ENCODE measurements at regions of chr14 and their contacts with region 1.

Region 1: GRCh38 chr14:63543000-63543825 is at the start of gene PPP2R5E:
- DNase-seq: peak; percentile 96
- ATAC-seq: peak; percentile 96
- H3K4me3 ChIP-seq: peak within 1 kb of the TSS; percentile 99
- H3K27ac ChIP-seq: peak within 1 kb of the TSS; percentile 77
- H3K4me1 ChIP-seq: no peaks in the 10 kb centered on the region
- H3K27me3 ChIP-seq: no peaks in the 10 kb centered on the region
- CTCF ChIP-seq: no peak
- EP300 ChIP-seq: no peak
- POLR2A ChIP-seq: peak; percentile 94
- RAD21 ChIP-seq: no peak
- polyA plus RNA-seq, gene PPP2R5E: 13.1 to 13.3 TPM

Region 2: DNA sequence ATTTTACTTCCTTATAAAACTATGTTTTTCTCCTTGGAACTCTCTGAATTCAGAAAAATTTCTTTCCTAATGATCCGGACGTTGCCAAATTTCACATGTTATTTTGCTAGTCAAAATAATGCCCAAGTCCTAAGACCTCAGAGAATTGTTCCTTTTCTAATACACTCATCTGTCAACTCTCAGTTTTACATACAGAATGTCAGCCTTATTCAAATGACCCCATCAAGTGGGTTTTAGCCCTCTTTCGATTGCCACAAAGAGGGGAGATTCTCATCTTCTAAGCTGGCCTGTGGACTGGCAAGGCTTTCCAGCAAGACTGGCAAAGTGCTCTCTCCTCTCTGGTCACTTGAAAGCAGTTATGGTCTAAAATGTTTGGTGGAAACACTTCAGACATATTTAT is 125.2 kb before region 1 on chr14:
- CTCF ChIA-PET with region 1: interaction called, 4 read pairs
- POLR2A ChIA-PET with region 1: no interaction called
- RAD21 ChIA-PET with region 1: no interaction called
- SMC1A ChIA-PET with region 1: no interaction called
- in situ Hi-C with region 1: no loop called
- intact Hi-C with region 1: loop called (anchors 10 kb)
- DNase-seq: no peak
- ATAC-seq: peak; percentile 74
- H3K4me3 ChIP-seq: no peak overlapping the region
- H3K27ac ChIP-seq: no peak overlapping the region
- H3K4me1 ChIP-seq: peaks cover 6% of the 10 kb centered on the region
- H3K27me3 ChIP-seq: no peaks in the 10 kb centered on the region
- CTCF ChIP-seq: no peak
- EP300 ChIP-seq: no peak
- POLR2A ChIP-seq: no peak
- RAD21 ChIP-seq: no peak

Region 3: GRCh38 chr14:63470962-63471793 is 72.0 kb before region 1 on chr14:
- CTCF ChIA-PET with region 1: interaction called, 4 read pairs
- POLR2A ChIA-PET with region 1: interaction called, 7 read pairs
- RAD21 ChIA-PET with region 1: interaction called, 24 read pairs
- SMC1A ChIA-PET with region 1: interaction called, 22 read pairs
- in situ Hi-C with region 1: no loop called
- intact Hi-C with region 1: loop called (anchors 5 kb)
- DNase-seq: peak; percentile 68
- ATAC-seq: peak; percentile 86
- H3K4me3 ChIP-seq: peak overlapping the region; percentile 20; the same call in 1 of the 2 replicates
- H3K27ac ChIP-seq: peak overlapping the region; percentile 69
- H3K4me1 ChIP-seq: peaks cover 22% of the 10 kb centered on the region
- H3K27me3 ChIP-seq: no peaks in the 10 kb centered on the region
- CTCF ChIP-seq: no peak
- EP300 ChIP-seq: peak; percentile 79 to 91
- POLR2A ChIP-seq: no peak
- RAD21 ChIP-seq: no peak

Region 4: DNA sequence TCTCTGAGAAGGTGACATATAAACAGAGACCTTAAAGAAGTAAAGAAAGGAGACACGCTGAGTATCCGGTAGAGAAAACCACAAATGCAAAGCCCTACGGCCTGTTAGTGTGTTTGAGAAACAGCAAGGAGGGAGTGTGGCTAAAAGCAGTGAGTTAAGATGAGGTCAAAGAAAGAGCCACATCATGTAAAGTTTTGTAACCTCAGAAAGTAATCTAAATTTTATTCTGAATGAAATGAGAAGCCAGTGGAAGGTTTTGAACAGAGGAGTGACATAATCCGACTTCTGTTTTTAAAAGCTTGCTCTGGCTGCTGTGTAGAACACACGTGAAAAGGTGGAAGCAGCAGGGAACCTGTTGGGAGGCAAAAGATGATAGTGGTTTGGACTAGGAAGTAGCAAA is 32.7 kb before region 1 on chr14:
- CTCF ChIA-PET with region 1: interaction called, 8 read pairs
- POLR2A ChIA-PET with region 1: interaction called, 3 read pairs
- RAD21 ChIA-PET with region 1: interaction called, 7 read pairs
- SMC1A ChIA-PET with region 1: interaction called, 11 read pairs
- in situ Hi-C with region 1: no loop called
- intact Hi-C with region 1: no loop called
- DNase-seq: peak; percentile 66
- ATAC-seq: peak; percentile 86
- H3K4me3 ChIP-seq: no peak overlapping the region
- H3K27ac ChIP-seq: peak overlapping the region; percentile 5
- H3K4me1 ChIP-seq: peaks cover 14% of the 10 kb centered on the region
- H3K27me3 ChIP-seq: no peaks in the 10 kb centered on the region
- CTCF ChIP-seq: no peak
- EP300 ChIP-seq: no peak
- POLR2A ChIP-seq: no peak
- RAD21 ChIP-seq: no peak

Region 5: DNA sequence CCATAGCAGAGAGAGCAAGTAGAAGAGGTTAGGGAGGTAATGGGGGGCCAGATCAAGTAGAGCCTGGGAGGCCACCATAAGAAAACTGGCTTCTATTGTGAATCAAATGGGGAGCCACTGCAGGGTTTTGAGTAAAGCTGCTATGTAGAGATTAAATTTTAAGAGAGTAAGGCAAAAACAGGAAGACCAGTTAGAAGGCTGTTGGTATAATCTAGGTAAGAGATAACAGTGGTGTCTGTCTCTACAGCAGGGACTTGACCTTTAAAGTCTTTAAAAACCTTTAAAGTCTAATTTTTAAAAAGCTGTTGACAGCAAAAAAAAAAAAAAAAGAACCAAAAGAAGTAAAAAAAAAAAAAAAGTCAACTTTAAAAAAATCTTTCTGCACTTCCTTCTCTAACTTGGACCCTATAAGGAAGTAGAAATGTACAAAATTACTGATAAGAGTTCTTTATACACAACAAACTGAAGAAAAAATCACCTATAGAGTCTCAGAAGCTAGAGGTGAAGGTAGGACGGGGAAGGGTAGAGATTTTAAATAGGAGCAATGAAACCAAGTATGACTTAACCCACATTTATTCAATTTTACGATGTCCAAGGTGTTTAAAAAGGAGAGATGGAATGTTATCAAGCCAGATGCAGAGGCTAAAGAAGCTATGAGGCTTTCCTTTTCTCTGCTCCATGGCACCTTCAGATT is 158.5 kb after region 1 on chr14:
- CTCF ChIA-PET with region 1: no interaction called
- POLR2A ChIA-PET with region 1: no interaction called
- RAD21 ChIA-PET with region 1: no interaction called
- SMC1A ChIA-PET with region 1: no interaction called
- in situ Hi-C with region 1: no loop called
- intact Hi-C with region 1: no loop called
- DNase-seq: no peak
- ATAC-seq: no peak
- H3K4me3 ChIP-seq: no peak overlapping the region
- H3K27ac ChIP-seq: no peak overlapping the region
- H3K4me1 ChIP-seq: peaks cover 24% of the 10 kb centered on the region
- H3K27me3 ChIP-seq: no peaks in the 10 kb centered on the region
- CTCF ChIP-seq: no peak
- EP300 ChIP-seq: no peak
- POLR2A ChIP-seq: no peak
- RAD21 ChIP-seq: no peak

Region 6: GRCh38 chr14:63727774-63728728 is 184.8 kb after region 1 on chr14 and contains the start of gene SGPP1:
- CTCF ChIA-PET with region 1: interaction called, 3 read pairs
- POLR2A ChIA-PET with region 1: no interaction called
- RAD21 ChIA-PET with region 1: interaction called, 12 read pairs
- SMC1A ChIA-PET with region 1: interaction called, 3 read pairs
- in situ Hi-C with region 1: no loop called
- intact Hi-C with region 1: no loop called
- DNase-seq: no peak
- ATAC-seq: peak; percentile 84
- H3K4me3 ChIP-seq: peak within 1 kb of the TSS; percentile 91
- H3K27ac ChIP-seq: peak within 1 kb of the TSS; percentile 60
- H3K4me1 ChIP-seq: peaks cover 3% of the 10 kb centered on the region; the same call in 1 of the 2 replicates
- H3K27me3 ChIP-seq: no peaks in the 10 kb centered on the region
- CTCF ChIP-seq: peak; percentile 39 to 59 (median 49); a peak in 5 of 6 replicates
- EP300 ChIP-seq: peak in 1 of 2 experiments; percentile 12; a peak in 1 of 4 replicates
- POLR2A ChIP-seq: peak; percentile 92
- RAD21 ChIP-seq: peak; percentile 49
- polyA plus RNA-seq, gene SGPP1: 8.8 to 17.1 TPM

Region 7: DNA sequence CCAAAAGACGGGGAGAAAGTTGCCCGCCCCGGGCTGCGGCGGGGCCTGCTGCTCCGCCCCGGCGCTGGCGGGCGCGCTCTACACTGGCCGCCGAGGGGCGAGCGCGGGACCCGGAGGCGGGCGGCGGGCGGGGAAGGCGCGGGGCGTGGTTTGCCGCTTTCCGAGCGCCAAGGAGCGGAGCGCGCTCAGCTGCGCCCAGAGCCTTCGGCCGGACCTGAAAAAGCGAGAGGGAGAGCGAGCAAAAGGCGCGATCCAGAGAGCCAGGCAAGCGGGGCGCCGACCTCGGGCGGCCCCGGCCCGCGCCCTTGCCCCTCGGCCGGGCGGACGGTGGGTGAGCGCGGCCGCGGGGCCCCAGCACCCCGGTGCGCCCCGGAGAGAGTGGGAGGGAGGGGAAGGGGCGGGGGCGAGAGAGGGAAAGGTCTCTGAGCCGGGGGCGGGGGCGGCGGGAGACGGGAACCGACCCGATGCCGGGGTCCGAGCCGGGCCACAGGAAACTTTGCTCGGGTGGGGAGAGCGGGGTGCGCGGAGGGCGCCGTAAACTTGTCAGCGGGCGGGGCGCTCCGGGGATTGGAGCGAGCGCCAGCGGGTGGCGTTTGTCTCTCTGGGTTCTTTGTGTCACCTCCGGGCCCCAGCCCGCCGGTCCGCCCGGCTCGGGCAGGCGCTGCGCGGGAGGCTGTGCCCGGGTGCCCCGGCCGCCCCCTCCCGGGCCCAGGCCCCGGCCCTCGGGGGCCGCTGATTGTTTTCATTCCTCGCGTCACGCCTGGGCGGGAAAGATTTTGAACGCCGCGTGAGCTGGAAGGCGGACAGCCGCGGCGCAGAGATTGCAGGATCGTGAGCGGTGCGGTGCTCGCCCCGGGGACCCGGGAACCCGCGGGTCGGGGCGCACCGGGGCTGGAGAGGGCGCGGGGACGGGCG is 309.9 kb after region 1 on chr14 and contains the start of gene SYNE2:
- CTCF ChIA-PET with region 1: no interaction called
- POLR2A ChIA-PET with region 1: interaction called, 10 read pairs
- RAD21 ChIA-PET with region 1: no interaction called
- SMC1A ChIA-PET with region 1: no interaction called
- in situ Hi-C with region 1: no loop called
- intact Hi-C with region 1: no loop called
- DNase-seq: no peak
- ATAC-seq: peak; percentile 94
- H3K4me3 ChIP-seq: peak within 1 kb of the TSS; percentile 94
- H3K27ac ChIP-seq: peak within 1 kb of the TSS; percentile 45
- H3K4me1 ChIP-seq: peaks cover 6% of the 10 kb centered on the region; the same call in 1 of the 2 replicates
- H3K27me3 ChIP-seq: no peaks in the 10 kb centered on the region
- CTCF ChIP-seq: peak; percentile 23 to 41 (median 23); a peak in 4 of 6 replicates
- EP300 ChIP-seq: no peak
- POLR2A ChIP-seq: peak; percentile 74
- RAD21 ChIP-seq: peak; percentile 42; the same call in 1 of the 2 replicates
- polyA plus RNA-seq, gene SYNE2: 2.1 to 4.6 TPM